Activated CD4-positive, alpha-beta T cell treated with anti-CD3 and anti-CD28 coated beads for 36 hours (primary cell): ENCODE measurements at regions of chr16 and their contacts with region 1.

Region 1: GRCh38 chr16:57519796-57520360 is 16.5 kb downstream of the CCDC102A start:
- DNase-seq: peak; percentile 90
- ATAC-seq: peak; percentile 96
- H3K4me3 Mint-ChIP-seq: no peak overlapping the region
- H3K27ac Mint-ChIP-seq: no peak overlapping the region
- H3K4me1 Mint-ChIP-seq: peaks cover 4% of the 10 kb centered on the region
- H3K27me3 Mint-ChIP-seq: no peaks in the 10 kb centered on the region

Region 2: GRCh38 chr16:57413301-57413730 is 106.6 kb before region 1 on chr16:
- CTCF ChIA-PET with region 1: interaction called, 43 read pairs
- POLR2A ChIA-PET with region 1: no interaction called
- intact Hi-C with region 1: loop called in 1 of 2 experiments (anchors 2 kb)
- DNase-seq: no peak
- ATAC-seq: no peak
- H3K4me3 Mint-ChIP-seq: no peak overlapping the region
- H3K27ac Mint-ChIP-seq: no peak overlapping the region
- H3K4me1 Mint-ChIP-seq: peaks cover 10% of the 10 kb centered on the region
- H3K27me3 Mint-ChIP-seq: no peaks in the 10 kb centered on the region

Region 3: DNA sequence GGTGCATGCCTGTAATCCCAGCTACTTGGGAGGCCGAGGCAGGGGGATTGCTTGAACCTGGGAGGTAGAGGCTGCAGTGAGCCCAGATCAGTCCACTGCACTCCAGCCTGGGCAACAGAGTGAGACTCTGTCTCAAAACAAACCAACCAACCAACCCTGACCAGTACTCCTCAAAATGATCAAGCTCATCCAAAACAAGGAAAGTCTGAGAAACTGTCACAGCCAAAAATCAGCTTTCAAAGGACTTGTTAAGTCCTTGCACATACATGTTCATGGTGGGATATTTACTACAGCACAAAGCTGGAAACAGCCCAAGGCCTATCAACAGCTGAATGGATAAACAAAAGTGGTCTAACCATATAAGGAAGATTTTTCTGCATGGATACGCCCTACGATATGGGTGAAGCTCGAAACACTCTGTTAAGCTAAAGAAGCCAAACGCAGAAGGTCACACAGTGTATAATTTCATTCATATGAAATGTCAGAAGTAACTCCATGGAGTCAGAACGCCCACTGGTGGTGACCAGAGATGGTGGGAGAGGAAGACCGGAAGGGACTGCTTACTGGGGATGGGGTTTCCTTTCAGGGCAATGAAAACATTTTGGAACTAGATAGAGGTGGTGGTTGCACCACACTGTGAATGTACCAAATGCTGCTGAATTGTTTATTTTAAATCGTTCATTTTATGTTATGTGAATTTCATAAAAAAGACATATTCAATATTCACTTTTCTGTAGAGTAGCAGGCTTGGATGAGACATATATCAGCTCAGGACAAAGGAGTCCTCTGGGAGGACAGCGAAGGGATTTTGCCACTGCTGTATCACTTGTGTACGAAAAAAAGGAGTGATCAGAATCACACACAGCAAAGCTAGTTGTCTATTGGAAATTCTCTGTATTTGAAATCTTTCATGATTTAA is 97.6 kb before region 1 on chr16:
- CTCF ChIA-PET with region 1: interaction called, 43 read pairs
- POLR2A ChIA-PET with region 1: no interaction called
- intact Hi-C with region 1: loop called (anchors 1 to 2 kb)
- DNase-seq: no peak
- ATAC-seq: no peak
- H3K4me3 Mint-ChIP-seq: no peak overlapping the region
- H3K27ac Mint-ChIP-seq: no peak overlapping the region
- H3K4me1 Mint-ChIP-seq: peaks cover 12% of the 10 kb centered on the region
- H3K27me3 Mint-ChIP-seq: no peaks in the 10 kb centered on the region

Region 4: GRCh38 chr16:57462209-57462977 is 57.5 kb before region 1 on chr16 and contains the start of gene POLR2C:
- CTCF ChIA-PET with region 1: interaction called, 45 read pairs
- POLR2A ChIA-PET with region 1: no interaction called
- intact Hi-C with region 1: loop called in 1 of 2 experiments (anchors 1 kb)
- DNase-seq: peak; percentile 96
- ATAC-seq: peak; percentile 96
- H3K4me3 Mint-ChIP-seq: peak within 1 kb of the TSS; percentile 90
- H3K27ac Mint-ChIP-seq: peak within 1 kb of the TSS; percentile 99
- H3K4me1 Mint-ChIP-seq: peaks cover 24% of the 10 kb centered on the region
- H3K27me3 Mint-ChIP-seq: no peaks in the 10 kb centered on the region
- total RNA-seq, gene POLR2C: 54.3 to 57.1 TPM

Region 5: GRCh38 chr16:57475711-57476339 is 44.1 kb before region 1 on chr16:
- CTCF ChIA-PET with region 1: interaction called, 23 read pairs
- POLR2A ChIA-PET with region 1: interaction called, 12 read pairs
- intact Hi-C with region 1: loop called (anchors 1 kb)
- DNase-seq: peak; percentile 95
- ATAC-seq: peak; percentile 98
- H3K4me3 Mint-ChIP-seq: no peak overlapping the region
- H3K27ac Mint-ChIP-seq: peak overlapping the region; percentile 63
- H3K4me1 Mint-ChIP-seq: peaks cover 19% of the 10 kb centered on the region
- H3K27me3 Mint-ChIP-seq: no peaks in the 10 kb centered on the region

Region 6: DNA sequence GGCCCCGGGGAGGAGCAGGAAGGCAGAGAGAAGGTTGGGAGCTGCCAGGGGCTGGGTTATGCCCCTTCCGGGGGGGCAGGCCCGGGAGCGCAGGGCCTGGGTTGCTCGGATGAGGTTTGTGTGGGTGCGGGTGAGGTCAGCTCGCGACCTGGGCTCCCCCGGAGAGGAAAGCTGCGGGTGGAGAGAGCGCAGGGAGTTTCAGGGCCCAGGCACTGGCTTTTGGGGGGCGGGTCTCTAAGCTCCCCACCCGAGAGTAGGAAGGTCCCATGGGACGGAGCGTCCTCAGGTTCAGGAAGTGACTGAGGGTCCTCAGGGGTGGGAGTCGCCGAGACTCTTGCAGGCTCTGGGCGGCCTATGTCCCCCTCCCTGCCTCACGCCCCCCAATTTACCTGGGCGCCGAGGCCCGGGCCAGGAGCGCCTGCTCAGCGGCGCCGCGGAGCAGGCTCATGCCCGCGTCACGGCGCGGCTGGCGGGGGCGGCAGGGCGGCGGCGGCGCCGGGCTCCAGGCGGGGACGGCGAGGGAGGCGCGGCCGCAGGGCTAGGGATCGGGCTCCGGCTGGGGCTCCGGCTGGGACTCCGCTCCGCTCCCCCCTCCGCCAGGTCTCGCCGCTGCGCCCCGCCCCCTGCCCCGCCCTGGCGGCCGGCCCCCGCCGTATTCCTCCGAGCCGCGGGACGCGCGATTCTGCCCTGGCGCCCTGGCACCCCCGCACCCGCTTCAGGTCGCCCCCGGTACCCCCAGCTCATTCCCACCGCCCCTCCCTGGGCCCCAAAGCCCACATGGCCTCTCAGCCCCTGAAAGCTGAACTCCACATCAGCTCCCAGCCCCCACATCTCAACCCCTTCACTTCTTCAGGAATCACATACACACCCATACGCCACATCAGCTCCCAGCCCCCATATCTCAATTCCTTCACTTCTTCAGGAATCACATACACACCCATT is 33.7 kb before region 1 on chr16 and contains the start of gene DOK4:
- CTCF ChIA-PET with region 1: interaction called, 13 read pairs
- POLR2A ChIA-PET with region 1: interaction called, 3 read pairs
- intact Hi-C with region 1: no loop called
- DNase-seq: peak; percentile 89
- ATAC-seq: peak; percentile 93
- H3K4me3 Mint-ChIP-seq: peak within 1 kb of the TSS; percentile 75
- H3K27ac Mint-ChIP-seq: peak within 1 kb of the TSS; percentile 71
- H3K4me1 Mint-ChIP-seq: peaks cover 22% of the 10 kb centered on the region
- H3K27me3 Mint-ChIP-seq: no peaks in the 10 kb centered on the region
- total RNA-seq, gene DOK4: 5.7 to 6.7 TPM

Region 7: GRCh38 chr16:57623248-57624043 is 103.6 kb after region 1 on chr16:
- CTCF ChIA-PET with region 1: no interaction called
- POLR2A ChIA-PET with region 1: no interaction called
- intact Hi-C with region 1: no loop called
- DNase-seq: no peak
- ATAC-seq: no peak
- H3K4me3 Mint-ChIP-seq: no peak overlapping the region
- H3K27ac Mint-ChIP-seq: no peak overlapping the region
- H3K4me1 Mint-ChIP-seq: peaks cover 5% of the 10 kb centered on the region
- H3K27me3 Mint-ChIP-seq: peaks cover 2% of the 10 kb centered on the region

Region 8: DNA sequence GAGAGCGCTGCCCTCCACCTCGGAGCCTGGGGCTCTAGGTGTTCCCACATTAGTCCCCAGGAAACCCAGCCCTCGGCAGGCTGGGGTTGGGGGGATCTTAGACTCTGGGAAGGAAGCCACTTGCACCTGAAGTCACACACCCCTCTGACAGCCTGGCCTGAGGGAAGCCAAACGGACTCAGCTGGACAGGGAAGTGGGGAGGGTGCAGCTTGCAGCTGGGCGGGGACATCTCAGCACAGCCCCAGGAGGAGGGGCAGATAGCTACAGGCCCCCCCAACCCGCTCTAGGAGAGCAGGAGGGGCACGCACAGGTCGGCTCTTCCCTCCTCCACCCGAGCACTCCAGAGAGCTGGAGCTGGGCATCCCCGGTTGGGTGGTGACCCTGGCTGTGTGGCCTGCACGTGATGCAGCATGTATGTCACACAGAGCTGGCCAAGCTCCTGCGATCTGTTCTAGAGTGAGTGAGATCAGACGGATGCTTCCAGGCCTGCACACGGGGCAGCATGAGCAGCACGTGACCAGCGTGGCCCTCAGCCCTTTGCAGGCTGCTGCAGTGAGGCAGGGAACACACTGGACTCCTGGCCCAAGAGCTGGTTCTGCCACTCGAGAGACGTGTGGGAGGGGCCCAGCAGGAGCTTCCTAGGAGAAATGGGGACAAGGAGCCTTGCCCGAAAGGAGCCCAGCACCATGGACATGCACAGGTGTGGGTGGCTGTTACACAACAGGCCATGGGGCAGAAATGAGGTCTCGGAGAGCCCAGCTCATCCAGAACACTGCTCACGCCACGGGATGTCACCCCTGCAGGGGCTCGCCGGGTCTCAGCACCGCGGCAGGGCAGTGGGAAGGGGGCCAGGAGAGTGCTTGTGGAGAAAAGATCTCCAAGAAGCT is 267.0 kb after region 1 on chr16:
- CTCF ChIA-PET with region 1: no interaction called
- POLR2A ChIA-PET with region 1: no interaction called
- intact Hi-C with region 1: no loop called
- DNase-seq: no peak
- ATAC-seq: no peak
- H3K4me3 Mint-ChIP-seq: no peak overlapping the region
- H3K27ac Mint-ChIP-seq: no peak overlapping the region
- H3K4me1 Mint-ChIP-seq: no peaks in the 10 kb centered on the region
- H3K27me3 Mint-ChIP-seq: no peaks in the 10 kb centered on the region